ENCODE measurements at regions of chr10 and their contacts with region 1.

Region 1: DNA sequence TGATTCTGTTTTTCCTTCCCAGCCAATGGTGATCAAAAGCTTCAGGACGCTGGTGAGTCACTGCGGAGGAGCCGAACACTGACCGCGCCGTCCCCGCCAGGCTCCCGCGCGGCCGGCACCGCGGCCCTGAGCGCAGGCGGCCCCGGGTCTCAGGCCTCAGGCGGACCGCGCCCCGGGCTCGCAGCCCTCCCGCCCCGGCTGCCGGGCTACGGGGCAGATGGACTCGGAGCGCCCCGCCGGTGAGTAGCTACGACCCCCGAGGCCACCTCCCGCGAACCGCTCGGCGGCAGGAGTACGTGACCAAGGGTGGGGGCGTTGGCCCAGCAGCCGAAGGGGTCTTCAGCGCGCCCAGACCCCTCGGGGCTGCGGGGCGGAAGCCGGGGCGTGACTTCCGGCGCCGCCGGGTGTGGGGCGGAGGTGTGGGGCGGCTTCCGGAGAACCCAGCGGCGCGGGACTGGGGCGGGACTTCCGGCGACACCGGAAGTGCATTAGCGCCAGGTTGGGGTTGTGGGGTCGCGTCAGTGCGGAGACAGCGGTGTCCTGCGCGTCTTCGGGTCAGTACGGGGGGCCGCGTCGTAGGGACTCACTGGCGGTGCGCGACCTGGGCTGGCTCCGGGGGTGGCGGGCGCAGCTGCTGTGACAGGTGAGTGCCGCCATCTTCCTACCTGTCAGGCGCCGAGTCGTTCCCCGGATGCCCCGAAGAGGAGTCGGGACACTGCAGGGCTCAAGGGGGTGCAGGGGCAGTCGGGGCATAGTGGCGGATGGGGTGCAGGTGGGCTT is at the start of gene WDR37:
- DNase-seq: peak; percentile 93 to 96
- ATAC-seq: peak; percentile 95
- H3K4me3 ChIP-seq: peak within 1 kb of the TSS; percentile 19 to 77
- H3K27ac ChIP-seq: peak within 1 kb of the TSS; percentile 93 to 95
- H3K4me1 ChIP-seq: peaks cover 0 to 2% of the 10 kb centered on the region in 2 donors
- H3K27me3 ChIP-seq: no peaks in the 10 kb centered on the region
- total RNA-seq, gene WDR37: 20.3 to 25.9 TPM

Region 2: DNA sequence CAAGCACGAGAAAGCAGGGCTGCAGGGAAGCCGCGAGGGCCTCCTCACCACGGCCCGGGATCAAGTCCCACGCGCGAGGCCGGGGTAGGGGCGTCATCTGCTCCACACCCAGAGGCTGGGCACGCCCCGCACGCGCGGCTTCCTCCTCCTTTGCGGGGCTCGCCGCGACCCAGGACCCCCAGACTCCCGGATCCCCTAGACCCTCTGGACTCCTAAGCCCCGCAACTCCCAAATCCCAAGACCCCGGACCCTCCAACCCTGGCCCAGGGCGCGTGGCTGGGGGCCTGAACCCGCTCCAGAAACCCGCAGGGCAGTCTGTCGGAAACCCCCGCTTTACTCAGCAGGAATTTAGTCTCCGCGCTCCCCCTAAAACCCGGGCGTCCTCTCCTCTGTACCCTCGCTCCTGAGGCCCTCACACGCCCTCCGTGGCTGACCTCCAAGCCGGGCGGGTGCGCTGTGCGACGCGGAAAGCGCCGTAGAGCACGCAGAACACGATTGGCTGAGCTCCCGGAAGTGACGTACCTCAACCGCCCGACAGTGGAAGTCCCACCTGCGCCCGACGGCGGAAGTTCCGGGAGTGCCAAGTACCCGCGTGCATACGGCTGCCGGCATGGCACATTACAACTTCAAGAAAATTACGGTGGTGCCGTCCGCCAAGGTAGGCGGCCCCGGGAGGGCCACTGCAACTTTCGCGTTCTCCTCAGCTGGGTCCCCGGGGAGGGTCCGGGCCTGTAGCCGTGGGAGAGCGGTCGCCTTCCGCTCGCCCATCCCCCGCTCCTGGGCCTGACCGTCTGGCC is 68.4 kb before region 1 on chr10 and contains the start of gene GTPBP4:
- intact Hi-C with region 1: loop called in 1 of 2 experiments (anchors 5 kb)
- DNase-seq: peak; percentile 99 to 100
- ATAC-seq: peak; percentile 99
- H3K4me3 ChIP-seq: peak within 1 kb of the TSS; percentile 70 to 81
- H3K27ac ChIP-seq: peak within 1 kb of the TSS in 1 of 2 donors; percentile 62
- H3K4me1 ChIP-seq: no peaks in the 10 kb centered on the region
- H3K27me3 ChIP-seq: no peaks in the 10 kb centered on the region
- total RNA-seq, gene GTPBP4: 29.2 to 46.9 TPM

Region 3: DNA sequence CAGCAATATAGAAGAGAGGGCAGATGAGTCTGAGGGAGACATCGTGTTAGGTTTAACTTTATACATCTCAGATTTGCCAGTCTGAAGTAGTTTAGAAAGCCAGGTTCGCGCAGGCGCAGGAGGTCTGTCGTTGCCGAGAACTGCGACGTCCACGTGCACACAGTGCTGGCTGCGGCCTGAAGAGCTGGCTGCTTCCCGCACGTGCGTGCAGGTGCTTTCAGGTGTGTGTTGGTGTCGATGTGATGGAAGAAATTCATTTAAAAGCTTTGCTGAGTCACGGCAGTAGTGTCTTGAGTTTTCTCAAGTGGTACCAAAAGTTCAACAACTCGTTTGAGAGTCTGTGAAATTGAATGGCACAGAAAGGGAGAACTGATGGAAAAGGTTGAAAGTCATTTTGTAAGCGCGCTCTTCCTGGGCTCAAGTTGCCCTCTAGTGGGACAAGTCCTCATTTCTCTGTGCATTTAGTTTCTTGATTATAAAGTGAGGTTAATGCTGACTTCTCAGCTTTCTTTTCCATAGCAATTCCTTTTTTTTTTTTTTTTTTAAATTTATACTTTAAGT is 18.3 kb after region 1 on chr10:
- intact Hi-C with region 1: no loop called
- DNase-seq: no peak
- ATAC-seq: no peak
- H3K4me3 ChIP-seq: no peak overlapping the region
- H3K27ac ChIP-seq: no peak overlapping the region
- H3K4me1 ChIP-seq: no peaks in the 10 kb centered on the region
- H3K27me3 ChIP-seq: no peaks in the 10 kb centered on the region